Left cardiac atrium (tissue), 4 donors: ENCODE measurements at regions of chr22 and their contacts with region 1.

Region 1: DNA sequence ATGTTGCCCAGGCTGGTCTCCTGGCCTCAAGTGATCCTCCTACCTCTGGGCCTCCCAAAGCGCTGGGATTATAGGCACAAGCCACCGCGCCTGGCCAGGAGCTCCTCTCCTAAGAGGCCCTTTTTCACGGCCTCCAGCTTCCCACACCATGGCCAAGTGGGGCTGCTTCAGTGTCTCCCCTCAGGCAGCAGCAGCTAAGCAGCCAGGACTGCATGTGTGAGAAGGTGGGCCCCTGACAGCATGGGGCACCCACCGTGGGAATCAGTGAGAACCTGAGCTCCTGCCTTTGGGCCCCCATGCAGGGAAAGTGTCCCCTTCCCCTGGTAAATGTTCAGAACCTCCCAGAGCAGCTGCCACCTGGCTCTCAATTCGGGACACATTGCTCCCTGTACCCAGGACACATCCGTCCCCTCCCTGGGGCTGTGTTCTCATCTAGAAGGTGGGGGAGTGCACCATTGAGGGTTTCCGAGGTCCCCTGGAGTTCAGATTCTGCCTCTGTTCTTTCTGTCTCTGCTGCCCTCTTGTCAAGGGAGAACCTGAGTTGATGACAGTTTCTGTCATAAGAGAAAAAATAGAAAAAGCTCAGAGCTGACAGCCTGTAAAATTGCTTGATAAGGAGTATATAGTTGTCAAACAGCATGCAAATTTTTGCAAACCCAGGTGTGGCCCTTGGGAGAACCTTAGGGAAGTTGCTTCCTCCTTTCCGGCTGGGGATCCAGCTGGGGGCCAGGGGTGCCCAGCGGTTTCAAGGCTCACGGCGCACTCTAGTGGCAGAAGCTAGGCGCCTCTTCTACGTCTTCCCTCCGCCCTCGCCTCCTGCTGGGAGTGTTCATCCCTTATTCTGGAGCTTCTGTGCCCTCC is 29.7 kb downstream of the FAM83F start:
- DNase-seq: peak; percentile 79
- ATAC-seq: peak; percentile 79 to 86

Region 2: GRCh38 chr22:39534591-39535356 is 489.7 kb before region 1 on chr22:
- intact Hi-C with region 1: loop called (anchors 5 kb)
- DNase-seq: peak; percentile 88
- ATAC-seq: peak; percentile 31 to 36

Region 3: DNA sequence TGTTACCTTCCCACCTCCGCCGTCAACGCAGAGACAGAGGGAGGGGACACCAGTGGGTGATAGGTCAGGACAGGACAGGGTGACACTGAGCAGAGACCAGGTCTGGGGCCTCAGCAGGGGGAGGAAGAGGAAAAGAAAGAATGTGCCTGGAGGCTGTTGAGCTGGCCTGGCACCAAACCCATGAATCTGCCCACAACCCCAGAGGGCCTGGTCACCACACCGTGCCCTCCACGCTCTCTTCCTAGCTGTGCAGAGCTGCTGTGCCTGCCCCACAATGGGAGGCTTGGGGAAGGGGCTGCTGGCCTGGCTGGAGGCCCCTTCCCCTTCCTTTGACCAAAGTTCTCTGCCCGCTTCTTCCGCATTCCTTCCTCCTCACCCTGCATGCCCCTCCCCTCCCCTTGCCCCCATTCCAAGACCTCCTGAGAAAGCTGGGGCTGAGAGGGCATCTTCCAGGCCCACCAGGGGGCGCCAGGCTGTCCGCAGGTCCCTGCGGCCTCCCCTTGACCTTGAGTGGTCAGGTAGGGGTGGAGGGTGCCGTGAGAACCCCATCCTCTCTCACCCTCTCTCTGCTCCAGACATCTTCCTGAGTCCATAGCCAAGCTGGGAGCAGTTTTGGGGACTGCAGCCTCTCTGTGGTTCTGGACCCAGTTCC is 464.9 kb before region 1 on chr22:
- intact Hi-C with region 1: loop called in 1 of 2 experiments (anchors 5 kb)
- DNase-seq: no peak
- ATAC-seq: no peak

Region 4: GRCh38 chr22:39622881-39623367 is 401.5 kb before region 1 on chr22:
- intact Hi-C with region 1: loop called (anchors 2 to 5 kb)
- DNase-seq: peak; percentile 60
- ATAC-seq: peak; percentile 50 to 57

Region 5: GRCh38 chr22:39932918-39933649 is 91.3 kb before region 1 on chr22:
- intact Hi-C with region 1: loop called in 1 of 2 experiments (anchors 10 kb)
- DNase-seq: no peak
- ATAC-seq: no peak

Region 6: DNA sequence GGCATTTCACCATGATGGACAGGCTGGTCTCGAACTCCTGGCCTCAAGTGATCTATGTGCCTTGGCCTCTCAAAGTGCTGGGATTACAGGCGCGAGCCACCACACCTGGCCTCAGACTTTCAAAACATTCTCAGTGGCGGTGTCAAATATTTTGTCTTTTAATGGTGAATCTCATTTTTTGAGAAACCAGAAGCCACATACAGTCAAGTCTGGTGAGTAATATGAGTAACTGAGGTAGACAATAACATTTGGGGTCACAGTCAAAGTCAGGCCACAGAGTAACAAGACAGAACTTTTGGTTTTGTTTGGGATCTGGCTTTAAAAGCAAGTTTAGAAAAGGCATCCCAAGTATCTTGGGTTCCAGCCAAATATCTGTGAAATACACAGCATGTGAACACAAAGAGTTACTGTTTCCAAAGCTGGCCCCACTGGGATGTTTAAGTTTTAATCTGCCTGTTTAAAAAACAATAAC is 69.8 kb before region 1 on chr22:
- intact Hi-C with region 1: no loop called
- DNase-seq: no peak
- ATAC-seq: no peak

Region 7: GRCh38 chr22:40105755-40106154 is 81.3 kb after region 1 on chr22:
- intact Hi-C with region 1: no loop called
- DNase-seq: no peak
- ATAC-seq: no peak